Naive thymus-derived CD4-positive, alpha-beta T cell (primary cell): ENCODE measurements at regions of chr1 and their contacts with region 1.

Region 1: GRCh38 chr1:77238462-77238861 is 19.2 kb upstream of the PIGK start:
- DNase-seq: no peak
- ATAC-seq: peak; percentile 62
- H3K4me3 ChIP-seq: no peak overlapping the region
- H3K4me3 Mint-ChIP-seq: no peak overlapping the region
- H3K27ac ChIP-seq: no peak overlapping the region
- H3K27ac Mint-ChIP-seq: peak overlapping the region in 1 of 9 donors; percentile 80
- H3K4me1 ChIP-seq: no peaks in the 10 kb centered on the region
- H3K4me1 Mint-ChIP-seq: peaks cover 0 to 5% (median 0%) of the 10 kb centered on the region in 7 donors
- H3K27me3 ChIP-seq: no peaks in the 10 kb centered on the region
- H3K27me3 Mint-ChIP-seq: peaks cover 0 to 4% (median 0%) of the 10 kb centered on the region in 5 donors

Region 2: DNA sequence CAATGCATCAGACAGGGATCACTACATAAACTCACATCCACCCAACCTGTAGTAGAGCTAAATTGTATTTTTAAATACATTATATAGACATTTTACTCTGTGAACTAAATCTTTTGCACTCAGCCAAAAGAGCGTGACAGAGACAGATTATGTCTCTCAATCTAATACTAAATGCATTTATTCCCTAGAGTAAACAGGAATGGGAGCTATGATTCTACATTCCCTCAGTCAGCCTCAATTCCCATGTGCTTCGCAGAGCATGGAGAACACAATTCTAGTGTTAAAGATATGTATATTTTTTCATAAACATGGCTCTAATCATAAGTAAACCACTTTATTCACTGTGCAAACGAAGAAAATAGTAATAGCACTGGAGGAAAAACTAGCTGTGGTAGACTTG is 35.7 kb before region 1 on chr1:
- CTCF ChIA-PET with region 1: interaction called, 3 read pairs
- POLR2A ChIA-PET with region 1: no interaction called
- intact Hi-C with region 1: loop called in 1 of 2 experiments (anchors 5 kb)
- DNase-seq: no peak
- ATAC-seq: no peak
- H3K4me3 ChIP-seq: no peak overlapping the region
- H3K4me3 Mint-ChIP-seq: no peak overlapping the region
- H3K27ac ChIP-seq: no peak overlapping the region
- H3K27ac Mint-ChIP-seq: peak overlapping the region in 1 of 9 donors; percentile 2
- H3K4me1 ChIP-seq: no peaks in the 10 kb centered on the region
- H3K4me1 Mint-ChIP-seq: peaks cover 0 to 27% (median 12%) of the 10 kb centered on the region in 7 donors
- H3K27me3 ChIP-seq: no peaks in the 10 kb centered on the region
- H3K27me3 Mint-ChIP-seq: no peaks in the 10 kb centered on the region